Ascending aorta (tissue), 2 donors: ENCODE measurements at regions of chr2 and their contacts with region 1.

Region 1: DNA sequence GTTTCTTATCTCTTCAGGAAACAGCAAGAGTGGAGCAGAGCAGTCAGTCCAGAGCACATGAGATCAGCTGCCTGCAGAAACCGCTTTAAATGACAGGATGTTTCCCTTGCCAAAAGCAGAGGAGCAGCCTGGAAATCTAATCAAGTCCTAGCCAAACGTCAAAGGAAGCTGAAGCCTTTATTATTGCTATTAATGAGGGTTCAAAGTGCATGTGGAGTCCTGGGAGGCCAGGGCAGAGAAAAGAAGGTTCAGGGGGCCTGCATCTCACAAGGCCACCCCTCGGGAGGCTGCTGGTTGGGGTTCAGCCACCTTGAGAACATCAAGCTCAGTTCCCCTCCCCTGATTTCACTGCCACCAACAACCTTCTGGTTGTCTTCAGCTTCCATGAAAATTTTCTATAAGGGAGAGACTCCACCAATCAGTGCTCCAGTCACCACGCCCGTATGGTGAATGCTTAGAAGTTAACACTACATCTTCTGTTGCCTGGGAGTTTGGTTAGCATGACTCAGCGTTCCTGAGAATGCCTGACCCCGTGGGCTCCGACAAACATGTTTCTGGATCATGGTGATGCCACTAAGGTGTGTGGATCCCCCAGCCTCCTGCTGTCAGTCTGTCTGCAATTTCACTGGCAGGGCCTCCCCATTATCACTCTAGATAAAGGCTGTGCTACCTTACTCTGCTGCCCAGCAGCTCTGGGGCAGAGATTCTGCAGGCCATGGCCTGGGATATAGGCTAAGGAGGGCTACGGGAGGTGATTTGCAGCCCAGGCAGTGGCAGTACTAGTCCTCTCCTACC is 66.2 kb downstream of the STPG4 start:
- DNase-seq: no peak
- H3K4me3 ChIP-seq: no peak overlapping the region
- H3K27ac ChIP-seq: no peak overlapping the region
- H3K4me1 ChIP-seq: peaks cover 0 to 19% of the 10 kb centered on the region in 2 donors
- H3K27me3 ChIP-seq: no peaks in the 10 kb centered on the region
- CTCF ChIP-seq: no peak

Region 2: GRCh38 chr2:46876741-46877384 is 212.0 kb before region 1 on chr2:
- intact Hi-C with region 1: no loop called
- DNase-seq: no peak
- H3K4me3 ChIP-seq: no peak overlapping the region
- H3K27ac ChIP-seq: no peak overlapping the region
- H3K4me1 ChIP-seq: peaks cover 0 to 10% of the 10 kb centered on the region in 2 donors
- H3K27me3 ChIP-seq: no peaks in the 10 kb centered on the region
- CTCF ChIP-seq: peak; percentile 47 to 67 (median 66)

Region 3: GRCh38 chr2:46915811-46916630 is 172.8 kb before region 1 on chr2:
- intact Hi-C with region 1: no loop called
- DNase-seq: peak; percentile 86 to 98
- H3K4me3 ChIP-seq: peak overlapping the region; percentile 83 to 88
- H3K27ac ChIP-seq: peak overlapping the region; percentile 97 to 99
- H3K4me1 ChIP-seq: peaks cover 4 to 25% of the 10 kb centered on the region in 2 donors
- H3K27me3 ChIP-seq: no peaks in the 10 kb centered on the region
- CTCF ChIP-seq: no peak

Region 4: DNA sequence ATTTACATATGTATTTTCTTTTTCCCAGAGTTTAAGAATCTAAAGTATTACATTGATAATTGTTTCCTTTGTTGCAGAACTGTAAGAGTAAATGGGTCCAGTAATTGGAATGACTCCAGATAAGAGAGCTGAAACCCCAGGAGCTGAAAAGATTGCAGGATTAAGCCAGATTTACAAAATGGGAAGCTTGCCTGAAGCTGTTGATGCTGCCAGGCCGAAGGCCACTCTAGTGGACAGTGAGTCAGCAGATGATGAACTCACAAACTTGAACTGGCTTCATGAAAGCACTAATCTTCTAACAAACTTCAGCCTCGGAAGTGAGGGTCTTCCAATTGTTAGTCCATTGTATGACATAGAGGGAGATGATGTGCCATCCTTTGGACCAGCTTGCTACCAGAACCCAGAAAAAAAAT is 1257.3 kb after region 1 on chr2:
- intact Hi-C with region 1: loop called (anchors 5 kb)
- DNase-seq: peak in 1 of 2 donors; percentile 73
- H3K4me3 ChIP-seq: peak overlapping the region in 1 of 2 donors; percentile 5
- H3K27ac ChIP-seq: peak overlapping the region; percentile 70 to 85
- H3K4me1 ChIP-seq: peaks cover 7 to 30% of the 10 kb centered on the region in 2 donors
- H3K27me3 ChIP-seq: no peaks in the 10 kb centered on the region
- CTCF ChIP-seq: no peak